Right ventricle myocardium superior (tissue), 1 donor: ENCODE measurements at regions of chr22 and their contacts with region 1.

Region 1: GRCh38 chr22:17910561-17911311 is 113.6 kb downstream of the MICAL3 start:
- DNase-seq: peak; percentile 84
- ATAC-seq: peak; percentile 86

Region 2: GRCh38 chr22:17945888-17946648 is 35.3 kb after region 1 on chr22:
- intact Hi-C with region 1: loop called (anchors 5 kb)
- DNase-seq: no peak
- ATAC-seq: no peak